ENCODE measurements at regions of chr10 and their contacts with region 1.

Region 1: GRCh38 chr10:90227217-90227656 is 525.8 kb downstream of the KIF20B start:
- DNase-seq: peak; percentile 47
- H3K4me3 Mint-ChIP-seq: no peak overlapping the region
- H3K27ac Mint-ChIP-seq: no peak overlapping the region
- H3K4me1 Mint-ChIP-seq: peaks cover 8% of the 10 kb centered on the region
- H3K27me3 Mint-ChIP-seq: peaks cover 18% of the 10 kb centered on the region

Region 2: GRCh38 chr10:90087197-90088007 is 139.8 kb before region 1 on chr10:
- CTCF ChIA-PET with region 1: no interaction called
- POLR2A ChIA-PET with region 1: no interaction called
- intact Hi-C with region 1: loop called (anchors 1 kb)
- DNase-seq: peak; percentile 24
- H3K4me3 Mint-ChIP-seq: no peak overlapping the region
- H3K27ac Mint-ChIP-seq: no peak overlapping the region
- H3K4me1 Mint-ChIP-seq: peaks cover 7% of the 10 kb centered on the region
- H3K27me3 Mint-ChIP-seq: no peaks in the 10 kb centered on the region